CD4-positive, alpha-beta T cell (primary cell): ENCODE measurements at regions of chr17 and their contacts with region 1.

Region 1: DNA sequence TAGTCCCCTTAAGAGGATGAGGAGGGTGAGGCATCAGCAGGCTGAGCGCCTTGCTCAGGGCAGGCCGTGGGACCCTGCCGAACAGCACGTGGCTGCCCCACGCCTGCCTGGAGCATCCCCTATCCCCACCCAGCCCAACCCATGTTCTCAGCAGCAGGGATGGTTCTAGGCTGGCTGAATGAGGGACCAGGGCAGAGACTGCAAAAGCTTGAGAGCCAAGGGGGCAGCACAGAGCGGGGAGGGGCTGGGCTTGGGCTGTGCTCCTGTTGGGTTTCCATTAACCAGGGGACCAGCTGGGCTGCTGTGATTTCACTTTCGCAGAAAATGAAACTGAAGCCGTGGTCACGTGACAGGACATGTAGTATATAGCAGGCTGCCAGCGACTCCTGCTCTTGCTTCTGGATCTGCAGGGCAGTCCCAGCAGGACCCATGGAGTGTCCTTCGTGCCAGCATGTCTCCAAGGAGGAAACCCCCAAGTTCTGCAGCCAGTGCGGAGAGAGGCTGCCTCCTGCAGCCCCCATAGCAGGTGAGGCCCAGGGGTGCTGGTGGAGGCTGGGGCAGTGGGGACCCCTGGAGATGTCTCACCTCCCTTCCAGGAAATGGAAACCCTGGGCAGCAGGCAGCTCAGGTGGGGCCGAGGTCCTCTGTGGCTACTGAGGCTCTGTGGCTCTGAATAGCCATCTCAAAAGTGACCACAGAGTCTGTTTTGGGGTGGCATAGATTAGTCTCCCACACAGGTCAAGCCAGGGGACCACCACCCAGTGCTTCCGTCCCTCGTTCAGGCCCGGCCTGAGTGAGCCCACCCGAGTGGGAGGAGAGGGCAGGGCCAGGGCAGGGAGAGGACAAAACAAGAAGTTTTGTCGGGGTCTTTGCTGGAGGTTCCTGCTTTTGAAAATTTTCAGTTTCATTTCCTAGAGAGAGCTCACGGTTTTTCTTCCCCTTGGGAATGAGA is 2.9 kb downstream of the RNF213 start:
- DNase-seq: peak; percentile 60 to 95 (median 80)
- ATAC-seq: peak; percentile 28
- H3K4me3 ChIP-seq: peak overlapping the region; percentile 97
- H3K4me3 Mint-ChIP-seq: peak overlapping the region; percentile 98
- H3K27ac ChIP-seq: peak overlapping the region; percentile 76 to 97
- H3K27ac Mint-ChIP-seq: peak overlapping the region; percentile 94
- H3K4me1 ChIP-seq: peaks cover 88% of the 10 kb centered on the region
- H3K4me1 Mint-ChIP-seq: peaks cover 57% of the 10 kb centered on the region
- H3K27me3 ChIP-seq: no peaks in the 10 kb centered on the region
- H3K27me3 Mint-ChIP-seq: no peaks in the 10 kb centered on the region
- CTCF ChIP-seq: no peak

Region 2: GRCh38 chr17:79065105-79065670 is 1198.3 kb before region 1 on chr17:
- CTCF ChIA-PET with region 1: no interaction called
- POLR2A ChIA-PET with region 1: no interaction called
- intact Hi-C with region 1: no loop called
- DNase-seq: peak in 13 of 14 experiments; percentile 40 to 80 (median 49)
- ATAC-seq: no peak
- H3K4me3 ChIP-seq: no peak overlapping the region
- H3K4me3 Mint-ChIP-seq: no peak overlapping the region
- H3K27ac ChIP-seq: no peak overlapping the region
- H3K27ac Mint-ChIP-seq: no peak overlapping the region
- H3K4me1 ChIP-seq: no peaks in the 10 kb centered on the region
- H3K4me1 Mint-ChIP-seq: peaks cover 3% of the 10 kb centered on the region
- H3K27me3 ChIP-seq: no peaks in the 10 kb centered on the region
- H3K27me3 Mint-ChIP-seq: no peaks in the 10 kb centered on the region
- CTCF ChIP-seq: peak; percentile 48

Region 3: GRCh38 chr17:80101011-80101945 is 162.3 kb before region 1 on chr17 and contains the start of gene GAA:
- CTCF ChIA-PET with region 1: interaction called, 3 read pairs
- POLR2A ChIA-PET with region 1: no interaction called
- intact Hi-C with region 1: loop called in 1 of 2 experiments (anchors 1 kb)
- DNase-seq: peak; percentile 71 to 95 (median 86)
- ATAC-seq: peak; percentile 83
- H3K4me3 ChIP-seq: peak within 1 kb of the TSS; percentile 99
- H3K4me3 Mint-ChIP-seq: peak within 1 kb of the TSS; percentile 93
- H3K27ac ChIP-seq: peak within 1 kb of the TSS in 1 of 2 donors; percentile 46
- H3K27ac Mint-ChIP-seq: peak within 1 kb of the TSS; percentile 84
- H3K4me1 ChIP-seq: peaks cover 29% of the 10 kb centered on the region
- H3K4me1 Mint-ChIP-seq: peaks cover 35% of the 10 kb centered on the region
- H3K27me3 ChIP-seq: no peaks in the 10 kb centered on the region
- H3K27me3 Mint-ChIP-seq: no peaks in the 10 kb centered on the region
- CTCF ChIP-seq: peak; percentile 64
- total RNA-seq, gene GAA: 22.2 to 22.4 TPM

Region 4: GRCh38 chr17:80147035-80147836 is 116.3 kb before region 1 on chr17 and contains the start of gene EIF4A3:
- CTCF ChIA-PET with region 1: no interaction called
- POLR2A ChIA-PET with region 1: interaction called, 3 read pairs
- intact Hi-C with region 1: loop called (anchors 1 to 2 kb)
- DNase-seq: peak; percentile 91 to 100 (median 95)
- ATAC-seq: peak; percentile 90
- H3K4me3 ChIP-seq: peak within 1 kb of the TSS; percentile 95
- H3K4me3 Mint-ChIP-seq: peak within 1 kb of the TSS; percentile 99
- H3K27ac ChIP-seq: peak within 1 kb of the TSS; percentile 84 to 93
- H3K27ac Mint-ChIP-seq: peak within 1 kb of the TSS; percentile 95
- H3K4me1 ChIP-seq: peaks cover 45% of the 10 kb centered on the region
- H3K4me1 Mint-ChIP-seq: peaks cover 49% of the 10 kb centered on the region
- H3K27me3 ChIP-seq: no peaks in the 10 kb centered on the region
- H3K27me3 Mint-ChIP-seq: no peaks in the 10 kb centered on the region
- CTCF ChIP-seq: no peak
- total RNA-seq, gene EIF4A3: 79.6 to 79.7 TPM

Region 5: DNA sequence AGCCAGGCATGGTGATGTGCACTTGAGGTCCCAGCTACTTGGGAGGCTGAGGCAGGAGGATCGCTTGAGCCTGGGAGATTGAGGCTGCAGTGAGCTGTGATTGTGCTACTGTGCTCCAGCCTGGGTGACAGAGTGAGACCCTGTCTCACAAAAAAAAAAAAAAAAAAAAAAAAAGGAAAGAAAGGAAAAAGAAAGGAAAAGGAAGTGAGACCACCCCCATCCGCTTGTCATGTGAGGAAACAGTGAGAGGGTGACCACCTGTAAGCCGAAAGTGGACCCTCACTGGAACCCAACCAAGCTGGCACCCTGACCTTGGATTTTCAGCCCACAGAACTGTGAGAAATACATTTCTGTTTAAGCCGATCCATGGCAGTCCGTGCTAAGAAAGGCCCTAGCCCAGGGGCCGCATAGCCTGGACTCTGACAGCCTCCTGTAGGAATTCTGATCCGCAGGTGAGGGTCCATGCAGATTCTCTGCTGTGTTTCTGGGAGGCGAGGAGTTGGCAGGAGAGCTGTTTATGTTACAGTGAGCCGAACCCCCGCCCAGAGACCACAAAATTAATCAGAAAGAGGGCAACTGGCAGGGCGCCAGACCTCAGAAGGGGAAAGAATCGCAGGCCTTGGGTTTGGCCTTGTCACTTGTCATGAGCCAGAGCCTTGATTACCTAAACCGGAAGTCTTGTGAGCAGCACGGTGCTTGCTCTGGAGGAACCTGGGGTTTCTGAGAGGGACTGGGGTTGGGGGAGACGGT is 44.3 kb before region 1 on chr17:
- CTCF ChIA-PET with region 1: no interaction called
- POLR2A ChIA-PET with region 1: interaction called, 6 read pairs
- intact Hi-C with region 1: loop called (anchors 2 kb)
- DNase-seq: peak; percentile 86 to 97 (median 93)
- ATAC-seq: peak; percentile 90
- H3K4me3 ChIP-seq: peak overlapping the region; percentile 99
- H3K4me3 Mint-ChIP-seq: peak overlapping the region; percentile 95
- H3K27ac ChIP-seq: peak overlapping the region; percentile 89 to 93
- H3K27ac Mint-ChIP-seq: peak overlapping the region; percentile 93
- H3K4me1 ChIP-seq: peaks cover 45% of the 10 kb centered on the region
- H3K4me1 Mint-ChIP-seq: peaks cover 43% of the 10 kb centered on the region
- H3K27me3 ChIP-seq: no peaks in the 10 kb centered on the region
- H3K27me3 Mint-ChIP-seq: no peaks in the 10 kb centered on the region
- CTCF ChIP-seq: no peak

Region 6: DNA sequence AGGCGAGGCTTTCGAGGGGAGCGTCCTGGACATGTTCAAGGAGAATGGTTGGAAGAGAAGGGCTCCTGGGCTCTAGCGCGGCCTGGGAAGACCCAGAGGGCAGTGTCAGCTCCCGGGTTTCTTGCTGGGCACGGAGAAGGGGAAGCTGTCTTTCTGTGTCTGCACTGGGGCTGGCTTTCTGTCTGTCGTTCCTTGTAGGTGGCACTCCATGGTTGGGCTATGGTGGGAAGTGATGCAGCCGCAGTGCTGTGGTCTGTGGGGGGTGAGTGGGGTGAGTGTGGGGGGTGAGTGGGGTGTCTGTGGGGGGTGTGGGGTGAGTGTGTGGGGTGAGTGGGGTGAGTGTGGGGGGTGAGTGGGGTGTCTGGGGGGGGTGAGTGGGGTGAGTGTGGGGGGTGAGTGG is 10.8 kb after region 1 on chr17:
- CTCF ChIA-PET with region 1: interaction called, 3 read pairs
- POLR2A ChIA-PET with region 1: interaction called, 11 read pairs
- intact Hi-C with region 1: no loop called
- DNase-seq: peak in 1 of 14 experiments; percentile 60
- ATAC-seq: no peak
- H3K4me3 ChIP-seq: no peak overlapping the region
- H3K4me3 Mint-ChIP-seq: peak overlapping the region; percentile 34
- H3K27ac ChIP-seq: peak overlapping the region in 1 of 2 donors; percentile 65
- H3K27ac Mint-ChIP-seq: peak overlapping the region; percentile 92
- H3K4me1 ChIP-seq: peaks cover 67% of the 10 kb centered on the region
- H3K4me1 Mint-ChIP-seq: peaks cover 18% of the 10 kb centered on the region
- H3K27me3 ChIP-seq: no peaks in the 10 kb centered on the region
- H3K27me3 Mint-ChIP-seq: no peaks in the 10 kb centered on the region
- CTCF ChIP-seq: no peak

Region 7: DNA sequence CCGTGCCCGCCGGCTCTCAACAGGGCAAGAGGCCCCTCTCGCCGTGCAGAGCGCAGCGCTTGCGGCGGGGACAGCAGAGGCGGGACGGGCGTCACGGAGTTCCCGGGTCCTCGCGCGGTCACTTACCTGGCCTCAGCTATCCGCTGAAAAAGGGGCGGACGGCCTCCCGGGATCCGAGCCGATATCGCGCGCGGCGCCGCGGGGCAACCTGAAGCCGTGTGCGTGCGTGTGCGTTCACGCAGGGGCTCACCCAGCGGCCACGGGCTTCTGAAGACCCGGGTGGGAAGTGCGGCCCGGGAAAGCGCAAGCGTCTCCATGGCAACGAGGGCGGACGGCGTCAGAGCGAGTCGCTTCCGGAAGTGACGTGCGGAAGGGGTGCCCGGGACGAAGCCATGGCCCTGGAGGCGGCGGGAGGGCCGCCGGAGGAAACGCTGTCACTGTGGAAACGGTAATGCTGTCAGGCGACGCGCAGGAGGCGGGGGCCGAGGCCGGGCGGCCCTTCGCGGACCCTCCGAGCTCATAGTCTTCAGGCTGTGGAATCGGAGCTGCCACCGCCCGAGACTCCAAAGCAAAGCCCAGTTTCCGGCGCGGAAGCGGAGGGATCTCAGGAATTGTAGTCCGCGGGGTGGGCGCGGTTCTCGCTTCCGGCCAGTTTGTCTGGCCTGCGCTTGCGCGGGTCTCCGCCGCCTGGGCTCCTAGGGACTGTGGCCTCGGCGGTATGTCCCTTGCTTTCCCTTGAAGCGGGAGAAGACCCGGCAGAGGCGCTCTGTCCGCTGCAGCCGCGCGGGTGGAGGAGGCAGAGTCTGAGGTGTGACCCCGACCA is 151.5 kb after region 1 on chr17 and contains the start of gene ENDOV:
- CTCF ChIA-PET with region 1: no interaction called
- POLR2A ChIA-PET with region 1: no interaction called
- intact Hi-C with region 1: loop called in 1 of 2 experiments (anchors 5 kb)
- DNase-seq: peak; percentile 88 to 99 (median 92)
- ATAC-seq: peak; percentile 89
- H3K4me3 ChIP-seq: peak within 1 kb of the TSS; percentile 100
- H3K4me3 Mint-ChIP-seq: peak within 1 kb of the TSS; percentile 93
- H3K27ac ChIP-seq: peak within 1 kb of the TSS; percentile 46 to 79
- H3K27ac Mint-ChIP-seq: peak within 1 kb of the TSS; percentile 7
- H3K4me1 ChIP-seq: peaks cover 31% of the 10 kb centered on the region
- H3K4me1 Mint-ChIP-seq: peaks cover 34% of the 10 kb centered on the region
- H3K27me3 ChIP-seq: peaks cover 0 to 10% of the 10 kb centered on the region in 2 experiments
- H3K27me3 Mint-ChIP-seq: peaks cover 27% of the 10 kb centered on the region
- CTCF ChIP-seq: no peak
- total RNA-seq, gene ENDOV: 10.1 to 12.0 TPM

Region 8: GRCh38 chr17:81512560-81513371 is 1249.2 kb after region 1 on chr17 and contains the start of gene ACTG1:
- CTCF ChIA-PET with region 1: no interaction called
- POLR2A ChIA-PET with region 1: no interaction called
- intact Hi-C with region 1: loop called in 1 of 2 experiments (anchors 10 kb)
- DNase-seq: peak; percentile 84 to 96 (median 92)
- ATAC-seq: peak; percentile 66
- H3K4me3 ChIP-seq: peak within 1 kb of the TSS; percentile 98
- H3K4me3 Mint-ChIP-seq: peak within 1 kb of the TSS; percentile 99
- H3K27ac ChIP-seq: peak within 1 kb of the TSS; percentile 72 to 87
- H3K27ac Mint-ChIP-seq: peak within 1 kb of the TSS; percentile 90
- H3K4me1 ChIP-seq: peaks cover 72% of the 10 kb centered on the region
- H3K4me1 Mint-ChIP-seq: peaks cover 57% of the 10 kb centered on the region
- H3K27me3 ChIP-seq: no peaks in the 10 kb centered on the region
- H3K27me3 Mint-ChIP-seq: no peaks in the 10 kb centered on the region
- CTCF ChIP-seq: no peak
- total RNA-seq, gene ACTG1: 1,296 to 1,318 TPM